ENCODE measurements at regions of chr14 and their contacts with region 1.

Region 1: DNA sequence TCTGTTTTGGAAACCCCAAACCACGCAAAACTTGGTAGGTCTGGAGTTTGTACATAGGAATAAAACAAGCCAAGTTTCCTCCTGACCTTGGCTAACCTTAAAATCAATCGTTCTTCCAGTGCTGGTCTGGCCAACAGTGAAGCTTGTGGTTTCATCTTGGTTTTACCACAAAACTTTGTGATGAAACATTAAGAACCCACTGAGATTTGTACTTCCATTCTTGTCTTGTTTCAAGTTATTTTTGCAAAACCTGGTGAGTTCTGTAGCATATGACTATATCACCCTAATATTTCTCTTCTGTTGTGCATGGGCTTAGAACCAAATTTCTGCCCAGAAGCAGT is 26.4 kb downstream of the SIX1 start:
- DNase-seq: no peak
- H3K4me3 ChIP-seq: no peak overlapping the region
- H3K27ac ChIP-seq: peak overlapping the region in 1 of 2 donors; percentile 31
- H3K4me1 ChIP-seq: no peaks in the 10 kb centered on the region
- H3K27me3 ChIP-seq: no peaks in the 10 kb centered on the region
- CTCF ChIP-seq: no peak
- POLR2A ChIP-seq: no peak

Region 2: GRCh38 chr14:60079724-60080123 is 543.2 kb before region 1 on chr14:
- intact Hi-C with region 1: no loop called
- DNase-seq: no peak
- H3K4me3 ChIP-seq: no peak overlapping the region
- H3K27ac ChIP-seq: no peak overlapping the region
- H3K4me1 ChIP-seq: no peaks in the 10 kb centered on the region
- H3K27me3 ChIP-seq: no peaks in the 10 kb centered on the region
- CTCF ChIP-seq: no peak
- POLR2A ChIP-seq: no peak

Region 3: GRCh38 chr14:61025251-61026223 is 402.6 kb after region 1 on chr14:
- intact Hi-C with region 1: loop called (anchors 10 kb)
- DNase-seq: peak; percentile 77
- H3K4me3 ChIP-seq: no peak overlapping the region
- H3K27ac ChIP-seq: no peak overlapping the region
- H3K4me1 ChIP-seq: no peaks in the 10 kb centered on the region
- H3K27me3 ChIP-seq: no peaks in the 10 kb centered on the region
- CTCF ChIP-seq: peak; percentile 79 to 87 (median 85)
- POLR2A ChIP-seq: no peak

Region 4: GRCh38 chr14:61252369-61253063 is 629.6 kb after region 1 on chr14:
- intact Hi-C with region 1: loop called (anchors 10 kb)
- DNase-seq: peak; percentile 88
- H3K4me3 ChIP-seq: no peak overlapping the region
- H3K27ac ChIP-seq: no peak overlapping the region
- H3K4me1 ChIP-seq: peaks cover 5% of the 10 kb centered on the region
- H3K27me3 ChIP-seq: no peaks in the 10 kb centered on the region
- CTCF ChIP-seq: peak; percentile 37 to 73 (median 71)
- POLR2A ChIP-seq: no peak